GM12878 (cell line): ENCODE measurements at regions of chr5 and their contacts with region 1.

Region 1: GRCh38 chr5:83430130-83431010 is 41.2 kb upstream of the VCAN start:
- DNase-seq: peak; percentile 21
- ATAC-seq: peak; percentile 98
- H3K4me3 ChIP-seq: no peak overlapping the region
- H3K27ac ChIP-seq: no peak overlapping the region
- H3K4me1 ChIP-seq: peaks cover 4% of the 10 kb centered on the region; the same call in 1 of the 2 replicates
- H3K27me3 ChIP-seq: no peaks in the 10 kb centered on the region
- CTCF ChIP-seq: peak; percentile 86 to 98 (median 91)
- EP300 ChIP-seq: no peak
- POLR2A ChIP-seq: no peak
- RAD21 ChIP-seq: peak; percentile 94

Region 2: GRCh38 chr5:82641331-82642003 is 788.9 kb before region 1 on chr5:
- CTCF ChIA-PET with region 1: interaction called, 18 read pairs
- POLR2A ChIA-PET with region 1: no interaction called
- RAD21 ChIA-PET with region 1: interaction called, 18 read pairs
- SMC1A ChIA-PET with region 1: interaction called, 10 read pairs
- in situ Hi-C with region 1: loop called (anchors 25 kb)
- intact Hi-C with region 1: loop called (anchors 1 kb)
- DNase-seq: peak; percentile 19
- ATAC-seq: peak; percentile 87
- H3K4me3 ChIP-seq: no peak overlapping the region
- H3K27ac ChIP-seq: no peak overlapping the region
- H3K4me1 ChIP-seq: no peaks in the 10 kb centered on the region
- H3K27me3 ChIP-seq: no peaks in the 10 kb centered on the region; a peak in 1 of 4 replicates
- CTCF ChIP-seq: peak; percentile 58 to 72 (median 61); a peak in 5 of 6 replicates
- EP300 ChIP-seq: no peak
- POLR2A ChIP-seq: no peak
- RAD21 ChIP-seq: peak; percentile 94

Region 3: GRCh38 chr5:82812575-82812974 is 617.8 kb before region 1 on chr5:
- CTCF ChIA-PET with region 1: no interaction called
- POLR2A ChIA-PET with region 1: no interaction called
- RAD21 ChIA-PET with region 1: no interaction called
- SMC1A ChIA-PET with region 1: interaction called, 3 read pairs
- in situ Hi-C with region 1: no loop called
- intact Hi-C with region 1: loop called (anchors 10 kb)
- DNase-seq: no peak
- ATAC-seq: no peak
- H3K4me3 ChIP-seq: no peak overlapping the region
- H3K27ac ChIP-seq: no peak overlapping the region
- H3K4me1 ChIP-seq: no peaks in the 10 kb centered on the region; the same call in 1 of the 2 replicates
- H3K27me3 ChIP-seq: no peaks in the 10 kb centered on the region
- CTCF ChIP-seq: no peak
- EP300 ChIP-seq: no peak
- POLR2A ChIP-seq: no peak
- RAD21 ChIP-seq: no peak

Region 4: GRCh38 chr5:82885627-82886389 is 544.6 kb before region 1 on chr5:
- CTCF ChIA-PET with region 1: interaction called, 3 read pairs
- POLR2A ChIA-PET with region 1: no interaction called
- RAD21 ChIA-PET with region 1: interaction called, 6 read pairs
- SMC1A ChIA-PET with region 1: interaction called, 8 read pairs
- in situ Hi-C with region 1: no loop called
- intact Hi-C with region 1: loop called (anchors 10 kb)
- DNase-seq: peak; percentile 16
- ATAC-seq: peak; percentile 77
- H3K4me3 ChIP-seq: no peak overlapping the region
- H3K27ac ChIP-seq: no peak overlapping the region
- H3K4me1 ChIP-seq: no peaks in the 10 kb centered on the region; the same call in 1 of the 2 replicates
- H3K27me3 ChIP-seq: no peaks in the 10 kb centered on the region
- CTCF ChIP-seq: peak in 2 of 3 experiments; percentile 15 to 17; a peak in 1 of 6 replicates
- EP300 ChIP-seq: peak in 1 of 2 experiments; percentile 36; a peak in 1 of 4 replicates
- POLR2A ChIP-seq: no peak
- RAD21 ChIP-seq: peak; percentile 41; the same call in 1 of the 2 replicates

Region 5: GRCh38 chr5:83076742-83077661 is 353.4 kb before region 1 on chr5 and contains the starts of genes TMEM167A and XRCC4:
- CTCF ChIA-PET with region 1: interaction called, 4 read pairs
- POLR2A ChIA-PET with region 1: no interaction called
- RAD21 ChIA-PET with region 1: no interaction called
- SMC1A ChIA-PET with region 1: interaction called, 4 read pairs
- in situ Hi-C with region 1: no loop called
- intact Hi-C with region 1: loop called (anchors 5 kb)
- DNase-seq: peak; percentile 96
- ATAC-seq: peak; percentile 98
- H3K4me3 ChIP-seq: peak within 1 kb of the TSS; percentile 87
- H3K27ac ChIP-seq: peak within 1 kb of the TSS; percentile 94
- H3K4me1 ChIP-seq: no peaks in the 10 kb centered on the region
- H3K27me3 ChIP-seq: no peaks in the 10 kb centered on the region
- CTCF ChIP-seq: no peak
- EP300 ChIP-seq: no peak; a peak in 1 of 4 replicates
- POLR2A ChIP-seq: peak; percentile 99
- RAD21 ChIP-seq: peak; percentile 6; the same call in 1 of the 2 replicates
- polyA plus RNA-seq, gene TMEM167A: 314 to 363 TPM
- polyA plus RNA-seq, gene XRCC4: 49.2 to 53.6 TPM

Region 6: DNA sequence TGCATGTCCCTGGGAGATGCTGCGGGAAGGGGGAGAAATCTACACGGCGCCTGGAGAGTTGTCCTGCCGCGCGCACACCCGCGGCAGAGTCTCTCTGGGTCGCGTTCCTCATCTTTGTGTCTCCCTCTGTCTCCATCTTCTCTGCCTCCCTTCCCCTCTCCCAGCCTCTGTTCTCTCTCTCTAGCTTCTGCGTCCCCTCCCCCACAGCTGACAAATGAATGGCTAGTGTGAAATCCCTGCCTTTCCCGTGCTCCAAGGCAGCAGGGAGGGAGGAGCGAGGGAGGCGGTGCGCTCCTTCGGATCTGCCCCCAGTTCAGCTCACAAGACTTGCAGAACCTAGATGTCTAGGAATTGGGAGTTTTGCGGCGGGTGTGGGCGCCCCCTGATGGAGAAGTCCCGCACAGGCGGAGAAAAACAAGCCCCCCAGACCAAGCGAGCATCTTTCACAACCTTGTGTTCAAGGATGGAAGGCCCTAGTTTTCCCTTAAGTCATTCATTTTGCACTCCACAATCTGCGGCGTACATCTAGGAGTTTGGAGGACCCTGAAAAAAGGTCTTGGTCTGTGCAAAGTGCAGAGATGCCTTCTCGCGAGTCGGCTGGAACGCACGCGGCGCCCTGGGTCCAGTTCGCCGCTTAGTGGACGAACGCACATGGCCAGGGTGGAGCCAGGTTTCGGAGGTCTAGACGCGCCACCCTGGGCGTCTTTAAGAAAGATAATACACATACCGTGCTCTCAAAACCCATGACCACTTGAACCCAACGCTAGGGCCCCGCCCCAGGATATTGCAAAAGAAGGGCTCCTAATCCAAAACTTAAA is 43.2 kb after region 1 on chr5:
- CTCF ChIA-PET with region 1: no interaction called
- POLR2A ChIA-PET with region 1: no interaction called
- RAD21 ChIA-PET with region 1: no interaction called
- SMC1A ChIA-PET with region 1: interaction called, 6 read pairs
- in situ Hi-C with region 1: no loop called
- intact Hi-C with region 1: loop called (anchors 2 kb)
- DNase-seq: peak; percentile 24
- ATAC-seq: peak; percentile 83
- H3K4me3 ChIP-seq: peak overlapping the region; percentile 78
- H3K27ac ChIP-seq: no peak overlapping the region
- H3K4me1 ChIP-seq: 0 out of 2 replicates have a peak, but pooled peaks cover 10% of the 10 kb centered on the region
- H3K27me3 ChIP-seq: peaks cover 15 to 17% of the 10 kb centered on the region in 2 experiments
- CTCF ChIP-seq: peak; percentile 73 to 85 (median 83)
- EP300 ChIP-seq: no peak
- POLR2A ChIP-seq: no peak
- RAD21 ChIP-seq: peak; percentile 84

Region 7: DNA sequence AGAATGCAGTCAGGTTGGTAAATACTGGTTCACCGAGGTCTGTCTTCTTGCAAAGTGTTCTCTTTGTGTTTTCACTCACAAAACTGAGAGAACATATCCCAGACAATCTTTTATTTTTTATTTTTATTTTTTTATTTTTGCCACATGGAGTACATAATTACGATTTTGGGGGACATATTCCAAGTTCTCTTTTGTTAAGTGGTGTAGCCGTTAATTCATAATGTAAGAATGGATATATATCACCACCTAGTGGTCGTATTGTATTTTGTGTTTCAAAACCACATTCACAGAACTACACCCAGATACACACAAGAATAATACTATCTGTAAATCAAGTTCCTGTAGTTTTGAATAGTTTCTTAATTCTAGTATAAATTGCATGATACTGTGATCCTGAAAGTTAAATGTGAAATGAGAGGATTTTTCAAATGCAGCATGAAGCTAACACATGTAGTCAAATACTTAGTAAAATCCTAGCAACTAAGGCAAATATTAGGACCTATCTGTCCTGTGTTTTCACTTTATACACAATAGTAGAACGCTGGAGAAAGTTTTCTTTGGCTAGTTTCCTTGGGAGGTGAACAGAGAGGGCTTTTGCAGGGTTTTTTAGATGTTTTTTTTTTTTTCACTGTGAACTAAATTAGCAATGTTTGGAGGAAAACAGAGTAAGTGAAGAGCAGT is 133.8 kb after region 1 on chr5:
- CTCF ChIA-PET with region 1: no interaction called
- POLR2A ChIA-PET with region 1: no interaction called
- RAD21 ChIA-PET with region 1: interaction called, 3 read pairs
- SMC1A ChIA-PET with region 1: interaction called, 3 read pairs
- in situ Hi-C with region 1: no loop called
- intact Hi-C with region 1: loop called (anchors 2 kb)
- DNase-seq: no peak
- ATAC-seq: peak; percentile 84
- H3K4me3 ChIP-seq: no peak overlapping the region
- H3K27ac ChIP-seq: no peak overlapping the region
- H3K4me1 ChIP-seq: no peaks in the 10 kb centered on the region
- H3K27me3 ChIP-seq: peaks cover 0 to 2% of the 10 kb centered on the region in 2 experiments; a peak in 1 of 4 replicates
- CTCF ChIP-seq: peak; percentile 20 to 68 (median 52); a peak in 5 of 6 replicates
- EP300 ChIP-seq: no peak
- POLR2A ChIP-seq: no peak
- RAD21 ChIP-seq: peak; percentile 76